Psoas muscle (tissue), 8 donors: ENCODE measurements at regions of chr9 and their contacts with region 1.

Region 1: GRCh38 chr9:97501177-97501971 is at the start of gene TMOD1:
- DNase-seq: peak; percentile 81 to 90
- ATAC-seq: peak; percentile 81 to 87 (median 82)
- H3K4me3 ChIP-seq: peak within 1 kb of the TSS; percentile 83
- H3K27ac ChIP-seq: peak within 1 kb of the TSS; percentile 96
- H3K4me1 ChIP-seq: peaks cover 33% of the 10 kb centered on the region
- H3K27me3 ChIP-seq: no peaks in the 10 kb centered on the region
- CTCF ChIP-seq: peak; percentile 27
- total RNA-seq, gene TMOD1: 138 to 209 (median 167) TPM

Region 2: DNA sequence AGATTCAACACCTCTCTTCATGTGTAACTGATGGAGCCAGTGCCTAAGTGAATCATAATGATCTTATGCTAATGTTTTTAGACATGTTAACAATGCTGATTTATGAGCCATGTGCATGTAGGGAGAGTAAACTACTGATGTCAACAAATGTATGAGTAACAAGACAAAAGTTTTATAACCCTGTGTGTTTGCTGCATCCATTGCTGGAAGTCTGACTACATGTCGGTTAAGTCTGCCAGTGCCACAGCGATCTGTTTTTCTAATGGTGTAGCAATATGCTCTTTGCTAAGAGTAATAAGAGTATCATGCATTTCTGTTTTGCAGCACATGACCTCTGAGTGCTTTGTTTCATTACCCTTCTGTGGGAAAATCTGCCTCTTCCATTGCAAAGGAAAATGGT is 26.3 kb before region 1 on chr9:
- intact Hi-C with region 1: loop called in 1 of 2 experiments (anchors 2 kb)
- DNase-seq: no peak
- ATAC-seq: no peak
- H3K4me3 ChIP-seq: no peak overlapping the region
- H3K27ac ChIP-seq: no peak overlapping the region
- H3K4me1 ChIP-seq: peaks cover 9% of the 10 kb centered on the region
- H3K27me3 ChIP-seq: no peaks in the 10 kb centered on the region
- CTCF ChIP-seq: no peak